ENCODE measurements at regions of chr6 and their contacts with region 1.

Region 1: GRCh38 chr6:149431905-149432775 is 32.1 kb downstream of the SUMO4 start:
- DNase-seq: peak; percentile 93
- H3K4me3 Mint-ChIP-seq: peak overlapping the region; percentile 37
- H3K27ac Mint-ChIP-seq: no peak overlapping the region
- H3K4me1 Mint-ChIP-seq: peaks cover 22% of the 10 kb centered on the region
- H3K27me3 Mint-ChIP-seq: no peaks in the 10 kb centered on the region

Region 2: DNA sequence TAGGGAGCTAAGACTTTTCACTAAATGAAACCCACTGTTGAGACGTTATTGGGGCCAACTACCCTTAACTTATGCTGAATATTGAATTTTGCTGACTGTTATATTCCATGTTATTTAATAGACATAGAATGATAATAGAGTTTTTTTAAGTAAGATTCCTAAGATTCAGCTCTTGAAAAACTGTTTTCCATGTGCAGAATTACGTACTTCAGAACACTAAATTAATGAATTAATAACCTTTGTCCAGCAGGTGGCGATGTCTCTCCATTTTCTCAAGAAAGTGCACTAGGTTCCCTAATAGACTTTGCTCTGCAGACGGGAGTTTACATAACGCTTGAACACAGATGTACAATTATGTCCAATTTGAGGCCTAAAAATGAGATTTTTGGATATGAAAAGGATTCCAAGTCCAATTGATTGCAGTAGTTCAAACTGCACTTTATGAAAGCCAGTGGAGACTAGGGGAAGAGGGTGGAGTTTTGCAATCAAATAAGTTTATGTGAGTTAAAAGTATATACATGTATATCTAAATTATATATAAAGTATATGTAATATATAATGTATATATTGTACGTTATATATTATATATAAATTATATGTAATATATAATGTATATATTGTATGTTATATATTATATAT is 403.3 kb before region 1 on chr6:
- CTCF ChIA-PET with region 1: interaction called, 213 read pairs
- DNase-seq: peak; percentile 78
- H3K4me3 Mint-ChIP-seq: no peak overlapping the region
- H3K27ac Mint-ChIP-seq: no peak overlapping the region
- H3K4me1 Mint-ChIP-seq: peaks cover 53% of the 10 kb centered on the region
- H3K27me3 Mint-ChIP-seq: no peaks in the 10 kb centered on the region

Region 3: DNA sequence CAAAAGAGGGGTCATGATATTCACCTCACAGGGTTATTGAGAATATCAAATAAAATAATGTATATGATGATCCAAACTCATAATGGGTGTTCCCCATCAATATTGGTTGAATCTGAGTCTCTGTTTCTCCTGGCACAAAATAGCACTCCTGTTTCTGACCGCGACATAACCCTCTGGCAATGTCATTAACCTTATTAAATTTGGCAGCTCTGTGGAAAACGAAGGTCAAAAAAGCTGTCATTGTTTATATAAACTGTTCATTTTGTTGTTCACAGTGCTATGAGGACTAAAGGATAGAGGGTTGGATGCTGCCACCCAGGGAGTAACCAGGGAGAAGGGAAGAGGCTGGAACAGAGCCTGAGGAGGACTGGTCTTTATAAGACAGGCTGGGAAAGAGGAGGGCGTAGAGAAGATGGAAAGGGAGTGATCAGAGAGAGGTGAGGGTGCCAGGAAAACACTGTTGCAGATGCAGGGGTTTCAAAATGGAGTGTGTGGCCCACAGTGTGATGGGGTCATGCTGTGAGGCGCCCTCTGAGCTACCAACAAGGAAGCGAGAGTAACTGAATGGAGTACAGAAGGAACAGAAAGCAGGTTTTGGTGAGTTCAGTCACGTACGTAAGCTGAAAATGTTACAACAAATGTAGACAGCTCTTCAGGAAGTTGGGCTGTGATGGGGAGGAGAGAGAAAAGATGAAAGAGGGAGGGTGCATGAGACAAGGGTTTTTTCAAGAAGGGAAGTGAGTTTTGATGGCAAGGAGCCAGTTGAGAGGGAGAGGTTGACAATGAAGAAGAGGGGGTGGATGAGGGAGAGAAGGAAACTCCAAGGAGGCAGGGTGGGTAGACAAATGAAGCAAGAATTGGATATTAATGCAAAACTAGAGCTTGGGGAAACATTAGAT is 366.2 kb before region 1 on chr6:
- CTCF ChIA-PET with region 1: interaction called, 10 read pairs
- DNase-seq: peak; percentile 62
- H3K4me3 Mint-ChIP-seq: peak overlapping the region; percentile 8
- H3K27ac Mint-ChIP-seq: peak overlapping the region; percentile 94
- H3K4me1 Mint-ChIP-seq: peaks cover 58% of the 10 kb centered on the region
- H3K27me3 Mint-ChIP-seq: no peaks in the 10 kb centered on the region

Region 4: GRCh38 chr6:149082286-149082707 is 349.8 kb before region 1 on chr6:
- CTCF ChIA-PET with region 1: interaction called, 25 read pairs
- DNase-seq: peak; percentile 94
- H3K4me3 Mint-ChIP-seq: peak overlapping the region; percentile 0
- H3K27ac Mint-ChIP-seq: peak overlapping the region; percentile 89
- H3K4me1 Mint-ChIP-seq: peaks cover 88% of the 10 kb centered on the region
- H3K27me3 Mint-ChIP-seq: no peaks in the 10 kb centered on the region

Region 5: DNA sequence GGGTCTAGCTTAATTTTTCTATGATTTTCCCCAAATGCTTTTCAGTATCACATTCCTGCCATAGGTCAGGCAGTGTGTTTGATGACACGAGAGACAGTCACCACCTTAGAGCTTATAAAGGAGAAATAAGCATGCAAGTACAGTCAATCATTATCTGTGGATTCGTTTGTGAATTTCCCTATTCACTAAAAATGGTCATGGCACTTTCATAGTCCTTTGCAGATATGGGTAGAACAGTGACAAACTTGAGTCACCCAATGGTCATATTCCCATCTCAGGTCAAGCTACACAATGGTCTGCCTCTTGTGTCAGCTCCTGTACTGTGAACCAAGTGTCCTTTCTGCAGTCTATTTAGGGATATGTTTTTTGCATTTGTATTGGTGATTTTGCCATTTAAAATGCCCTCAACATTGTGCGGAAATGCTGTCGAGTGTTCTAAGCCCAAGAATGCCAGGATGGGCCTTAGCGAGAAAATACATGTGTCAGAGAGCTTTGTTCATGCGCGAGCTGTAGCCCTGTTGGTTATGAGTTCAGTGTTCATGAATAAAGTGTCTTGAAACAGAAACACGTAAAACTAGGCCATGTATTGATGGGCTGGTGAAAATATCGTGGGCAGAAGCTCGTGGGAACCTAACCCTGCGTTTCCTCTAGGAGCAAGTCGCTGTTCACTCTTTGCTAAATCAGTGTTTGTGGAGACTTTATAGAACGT is 12.3 kb before region 1 on chr6:
- CTCF ChIA-PET with region 1: interaction called, 13 read pairs
- DNase-seq: no peak
- H3K4me3 Mint-ChIP-seq: no peak overlapping the region
- H3K27ac Mint-ChIP-seq: no peak overlapping the region
- H3K4me1 Mint-ChIP-seq: peaks cover 6% of the 10 kb centered on the region
- H3K27me3 Mint-ChIP-seq: no peaks in the 10 kb centered on the region

Region 6: DNA sequence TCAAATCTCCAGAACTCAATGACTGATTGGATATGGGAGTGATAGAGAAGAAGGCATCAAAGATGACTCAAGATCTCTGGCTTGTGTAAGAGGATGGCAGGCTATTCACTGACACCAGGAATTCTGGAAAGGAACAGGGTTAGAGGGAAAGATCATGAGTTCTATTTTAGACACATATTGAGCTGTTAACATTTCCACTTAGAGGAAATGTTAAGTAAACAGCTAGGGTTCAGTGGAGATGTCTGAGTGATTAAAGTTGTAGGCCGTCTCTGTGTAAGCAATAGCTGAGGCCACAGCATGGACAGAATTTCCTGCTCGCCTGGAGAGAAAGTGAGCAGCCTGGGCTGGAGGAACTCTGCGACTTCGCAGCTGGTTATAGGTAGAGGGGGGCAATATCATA is 31.6 kb after region 1 on chr6:
- CTCF ChIA-PET with region 1: interaction called, 13 read pairs
- DNase-seq: no peak
- H3K4me3 Mint-ChIP-seq: no peak overlapping the region
- H3K27ac Mint-ChIP-seq: no peak overlapping the region
- H3K4me1 Mint-ChIP-seq: peaks cover 23% of the 10 kb centered on the region
- H3K27me3 Mint-ChIP-seq: no peaks in the 10 kb centered on the region

Measured in activated naive CD4-positive, alpha-beta T cell treated with anti-CD3 and anti-CD28 coated beads, Interleukin-2, amount 10 ng/mL, durations not matched to agents 7 days and 5 days (primary cell).